AG04450 (cell line): ENCODE measurements at regions of chr17 and their contacts with region 1.

Region 1: GRCh38 chr17:45148183-45149036 is at the start of gene HEXIM1:
- DNase-seq: peak; percentile 99
- H3K4me3 ChIP-seq: peak within 1 kb of the TSS; percentile 96
- H3K27ac ChIP-seq: peak within 1 kb of the TSS; percentile 98
- H3K27me3 ChIP-seq: no peaks in the 10 kb centered on the region
- CTCF ChIP-seq: no peak
- polyA plus RNA-seq, gene HEXIM1: 12.4 and 13.2 TPM in 2 replicates

Region 2: GRCh38 chr17:45060797-45061605 is 87.4 kb before region 1 on chr17 and contains the start of gene NMT1:
- CTCF ChIA-PET with region 1: interaction called, 3 read pairs
- POLR2A ChIA-PET with region 1: interaction called, 25 read pairs
- DNase-seq: peak; percentile 98
- H3K4me3 ChIP-seq: peak within 1 kb of the TSS; percentile 91
- H3K27ac ChIP-seq: peak within 1 kb of the TSS; percentile 84
- H3K27me3 ChIP-seq: no peaks in the 10 kb centered on the region
- CTCF ChIP-seq: no peak
- polyA plus RNA-seq, gene NMT1: 60.6 and 63.6 TPM in 2 replicates

Region 3: GRCh38 chr17:45172454-45173286 is 24.3 kb after region 1 on chr17:
- CTCF ChIA-PET with region 1: interaction called, 10 read pairs
- POLR2A ChIA-PET with region 1: interaction called, 73 read pairs
- DNase-seq: no peak
- H3K4me3 ChIP-seq: 0 out of 2 replicates have a peak overlapping the region, but pooled peaks have one; percentile 10
- H3K27ac ChIP-seq: peak overlapping the region; percentile 75
- H3K27me3 ChIP-seq: no peaks in the 10 kb centered on the region
- CTCF ChIP-seq: no peak

Region 4: GRCh38 chr17:45218895-45219661 is 70.7 kb after region 1 on chr17:
- CTCF ChIA-PET with region 1: interaction called, 3 read pairs
- POLR2A ChIA-PET with region 1: interaction called, 11 read pairs
- DNase-seq: peak; percentile 61
- H3K4me3 ChIP-seq: peak overlapping the region; percentile 27; the same call in 1 of the 2 replicates
- H3K27ac ChIP-seq: no peak overlapping the region
- H3K27me3 ChIP-seq: peaks cover 24% of the 10 kb centered on the region
- CTCF ChIP-seq: peak; percentile 88